ENCODE measurements at regions of chr6 and their contacts with region 1.

Region 1: GRCh38 chr6:43667245-43668150 is 20.1 kb downstream of the MRPS18A start:
- DNase-seq: peak; percentile 58 to 78 (median 70)
- H3K4me3 ChIP-seq: peak overlapping the region in 3 of 7 experiments; percentile 4 to 62 (median 37)
- H3K27ac ChIP-seq: no peak overlapping the region
- H3K4me1 ChIP-seq: peaks cover 0 to 18% (median 14%) of the 10 kb centered on the region in 4 experiments
- H3K27me3 ChIP-seq: no peaks in the 10 kb centered on the region

Region 2: GRCh38 chr6:43608310-43608763 is 59.2 kb before region 1 on chr6:
- CTCF ChIA-PET with region 1: interaction called, 32 read pairs
- POLR2A ChIA-PET with region 1: no interaction called
- DNase-seq: peak; percentile 68 to 77 (median 70)
- H3K4me3 ChIP-seq: no peak overlapping the region
- H3K27ac ChIP-seq: no peak overlapping the region
- H3K4me1 ChIP-seq: peaks cover 0 to 5% (median 1%) of the 10 kb centered on the region in 4 experiments
- H3K27me3 ChIP-seq: no peaks in the 10 kb centered on the region

Region 3: DNA sequence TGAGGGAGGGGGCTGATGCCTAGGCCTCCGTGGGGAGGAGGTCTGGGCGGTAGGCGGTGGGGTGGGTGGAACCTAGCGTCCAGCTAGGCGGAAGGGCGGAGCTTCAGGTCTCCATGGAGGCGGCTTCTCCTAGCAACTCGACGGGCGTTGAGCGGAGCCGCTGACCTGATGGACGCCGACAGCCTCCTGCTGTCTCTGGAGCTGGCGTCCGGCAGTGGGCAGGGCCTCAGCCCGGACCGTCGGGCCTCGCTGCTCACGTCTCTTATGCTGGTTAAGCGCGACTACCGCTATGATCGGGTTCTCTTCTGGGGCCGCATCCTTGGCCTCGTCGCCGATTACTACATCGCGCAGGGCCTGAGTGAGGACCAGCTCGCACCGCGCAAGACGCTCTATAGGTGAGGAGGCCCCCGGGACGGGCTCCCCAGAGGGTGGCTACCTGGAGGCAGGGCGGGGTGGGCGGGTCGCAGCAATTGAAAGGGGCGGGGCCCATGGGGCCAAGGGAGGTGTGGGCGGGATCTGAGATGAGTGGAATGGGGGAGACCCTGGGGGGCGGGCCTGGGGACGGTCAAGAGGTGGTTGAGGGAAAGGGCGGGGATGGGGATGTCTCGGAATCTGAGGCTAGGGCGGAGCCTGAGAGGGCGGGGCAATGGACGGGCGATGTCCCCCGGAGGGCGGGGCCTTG is 22.4 kb before region 1 on chr6 and contains the start of gene RSPH9:
- CTCF ChIA-PET with region 1: interaction called, 21 read pairs
- POLR2A ChIA-PET with region 1: no interaction called
- DNase-seq: peak in 2 of 3 donors; percentile 71 to 76
- H3K4me3 ChIP-seq: peak within 1 kb of the TSS in 6 of 7 experiments; percentile 32 to 87 (median 74)
- H3K27ac ChIP-seq: no peak within 1 kb of the TSS
- H3K4me1 ChIP-seq: peaks cover 0 to 18% (median 11%) of the 10 kb centered on the region in 4 experiments
- H3K27me3 ChIP-seq: no peaks in the 10 kb centered on the region

Region 4: DNA sequence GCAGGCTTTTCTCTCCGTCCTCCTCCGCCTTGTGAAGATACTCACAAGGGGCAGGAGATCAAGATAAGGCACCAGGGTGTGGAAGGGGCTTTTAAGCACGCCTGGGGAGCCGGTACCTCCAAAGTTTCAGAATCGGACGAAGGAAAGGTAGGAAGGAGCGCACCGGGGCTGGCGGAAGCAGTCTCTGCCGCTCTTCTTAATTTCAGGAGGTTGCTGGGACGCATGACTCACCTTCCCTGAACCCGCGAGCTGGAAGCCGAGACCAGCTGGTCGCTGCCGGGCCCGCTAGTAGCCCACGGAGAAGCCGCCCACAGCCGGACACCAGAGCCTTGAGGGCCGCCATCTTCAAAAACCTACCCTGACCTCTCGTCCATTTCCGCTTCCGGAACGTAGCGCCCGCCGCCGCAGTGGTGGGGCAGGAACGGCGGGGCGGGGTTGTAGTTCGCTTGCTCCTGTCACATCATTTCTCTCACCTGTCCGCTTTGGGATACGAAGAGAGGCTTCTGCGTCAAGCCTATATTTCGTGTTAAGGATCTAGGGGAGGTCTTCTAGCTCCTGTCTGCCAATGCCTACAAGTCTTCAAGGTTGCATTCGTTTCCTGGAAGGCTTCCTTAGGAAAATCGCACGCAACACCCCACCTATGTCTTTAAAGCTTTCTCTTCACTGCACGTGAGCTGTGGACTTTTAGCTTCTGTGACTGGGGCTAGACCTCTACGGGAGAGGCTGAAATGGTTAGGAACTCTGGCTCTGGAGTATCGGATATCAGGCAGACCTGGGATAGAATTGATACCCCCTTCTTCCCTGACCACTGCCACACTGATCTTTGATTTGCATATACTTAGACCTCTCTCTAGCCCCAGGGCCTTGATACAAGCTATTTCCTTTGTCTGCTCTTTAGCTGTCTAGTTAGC is 20.2 kb after region 1 on chr6 and contains the start of gene MRPS18A:
- CTCF ChIA-PET with region 1: interaction called, 64 read pairs
- POLR2A ChIA-PET with region 1: interaction called, 5 read pairs
- DNase-seq: peak; percentile 51 to 64 (median 53)
- H3K4me3 ChIP-seq: peak within 1 kb of the TSS; percentile 91 to 98 (median 94)
- H3K27ac ChIP-seq: peak within 1 kb of the TSS; percentile 76 to 83
- H3K4me1 ChIP-seq: peaks cover 7 to 27% (median 12%) of the 10 kb centered on the region in 4 experiments
- H3K27me3 ChIP-seq: peaks cover 0 to 4% (median 3%) of the 10 kb centered on the region in 5 experiments

Region 5: DNA sequence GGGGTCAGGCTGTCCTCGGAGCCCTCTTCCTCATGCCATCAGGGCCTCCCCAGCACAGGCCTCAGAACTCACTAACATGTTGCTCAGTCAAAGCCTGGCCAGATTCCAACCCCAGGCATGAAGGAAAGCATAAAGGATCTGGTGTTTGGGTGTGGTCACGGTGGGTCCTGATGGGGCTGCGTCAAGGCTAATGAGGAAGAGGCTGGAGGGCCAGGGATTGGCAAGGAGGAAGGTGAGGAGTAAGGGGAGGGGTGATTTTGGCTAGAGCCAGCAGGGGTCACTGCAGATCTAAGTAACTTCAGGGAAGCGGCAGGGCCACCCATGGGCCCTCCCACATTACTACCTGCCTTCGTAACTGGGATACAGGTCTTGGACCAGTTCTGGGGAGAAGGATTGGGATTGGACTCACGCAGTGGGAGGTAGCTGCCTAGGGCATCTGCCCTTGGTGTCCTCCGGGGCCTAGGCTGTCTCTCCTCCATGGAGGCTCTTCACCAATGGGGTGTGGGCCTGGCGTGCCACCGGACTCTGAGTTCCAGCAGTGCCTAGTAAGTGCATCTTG is 56.3 kb after region 1 on chr6:
- CTCF ChIA-PET with region 1: interaction called, 13 read pairs
- POLR2A ChIA-PET with region 1: no interaction called
- DNase-seq: peak; percentile 79 to 87 (median 81)
- H3K4me3 ChIP-seq: no peak overlapping the region
- H3K27ac ChIP-seq: no peak overlapping the region
- H3K4me1 ChIP-seq: peaks cover 4 to 29% (median 27%) of the 10 kb centered on the region in 4 experiments
- H3K27me3 ChIP-seq: peaks cover 0 to 7% (median 0%) of the 10 kb centered on the region in 5 experiments

Region 6: DNA sequence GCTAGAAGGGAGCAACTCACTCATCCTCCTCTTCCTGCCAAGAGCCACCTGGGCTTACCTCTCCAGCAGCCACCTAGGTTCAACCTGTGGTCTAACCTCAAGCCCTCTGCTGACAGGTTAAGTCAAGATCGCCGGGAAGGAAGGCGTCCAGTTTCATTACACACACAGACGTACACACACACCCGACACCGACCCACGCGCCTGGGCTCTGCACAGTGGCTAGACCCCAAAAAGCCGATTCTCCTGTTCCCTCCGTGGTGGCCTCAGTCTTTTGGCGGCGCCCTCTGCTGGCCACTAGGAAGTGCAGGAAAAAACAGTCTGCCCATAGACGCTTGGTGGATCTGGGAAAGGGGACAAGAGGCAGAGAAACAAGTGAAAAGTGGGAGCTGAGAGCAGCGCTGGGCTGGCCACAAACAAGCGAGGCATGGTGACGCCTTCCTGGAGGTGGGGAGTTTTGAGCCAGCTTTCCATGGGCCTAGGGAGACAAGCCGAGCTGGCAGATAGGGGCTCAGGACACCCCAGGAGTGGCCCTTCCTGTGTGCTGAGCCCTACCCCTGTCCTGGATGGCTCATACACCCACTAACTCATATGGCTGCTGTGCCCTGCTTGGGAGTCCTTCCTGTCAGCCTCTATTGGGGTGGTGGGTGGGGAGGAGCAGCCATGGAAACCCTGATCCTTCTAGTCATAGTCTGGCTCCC is 407.1 kb after region 1 on chr6:
- CTCF ChIA-PET with region 1: interaction called, 89 read pairs
- POLR2A ChIA-PET with region 1: interaction called, 3 read pairs
- DNase-seq: peak; percentile 74 to 85 (median 80)
- H3K4me3 ChIP-seq: peak overlapping the region in 1 of 7 experiments; percentile 61
- H3K27ac ChIP-seq: peak overlapping the region in 1 of 2 experiments; percentile 73
- H3K4me1 ChIP-seq: peaks cover 3 to 31% (median 25%) of the 10 kb centered on the region in 4 experiments
- H3K27me3 ChIP-seq: peaks cover 0 to 43% (median 17%) of the 10 kb centered on the region in 5 experiments

Measured in common myeloid progenitor, CD34-positive (primary cell).